ENCODE measurements at regions of chr16 and their contacts with region 1.

Region 1: DNA sequence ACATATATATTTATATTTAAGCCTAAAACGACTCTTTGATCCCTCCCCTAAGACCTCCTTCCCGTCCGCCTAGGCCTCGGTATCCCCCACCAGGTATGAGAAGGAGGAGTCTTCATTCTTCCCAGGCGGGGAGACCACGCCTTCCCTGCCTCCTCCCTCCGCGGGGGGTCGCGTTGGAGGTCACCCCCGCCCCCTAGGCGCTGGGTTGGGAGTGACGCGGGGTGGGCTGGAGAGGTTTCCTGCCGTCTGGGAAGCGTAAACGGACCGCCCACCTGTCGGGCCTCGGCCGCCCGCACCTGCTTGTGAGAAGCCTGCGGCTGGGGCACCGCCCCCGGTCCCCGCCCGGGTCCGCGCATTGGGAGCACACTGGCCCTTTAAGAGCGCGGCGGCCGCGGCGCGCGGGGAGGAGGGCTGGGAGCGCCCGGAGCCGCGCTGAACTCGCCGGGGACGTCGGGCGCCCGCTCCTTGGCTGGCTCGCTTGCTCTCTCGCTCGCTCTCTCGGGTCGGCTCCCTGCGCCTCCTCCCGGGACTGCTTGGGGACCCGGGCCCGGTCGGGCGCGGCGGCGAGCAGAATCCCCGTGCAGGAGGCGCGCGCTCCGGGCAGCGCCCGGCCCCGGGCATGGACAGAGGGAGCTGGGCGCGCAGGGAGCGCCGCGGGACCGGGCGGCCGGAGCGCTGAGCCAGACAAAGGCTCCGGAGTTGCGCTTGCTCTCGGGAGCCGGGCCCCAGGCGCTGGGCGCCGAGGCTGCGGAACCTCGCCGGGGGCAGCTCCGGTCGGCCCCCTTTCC is at the start of gene MMP15:
- DNase-seq: peak; percentile 89 to 94
- H3K4me3 ChIP-seq: peak within 1 kb of the TSS; percentile 94
- H3K27ac ChIP-seq: peak within 1 kb of the TSS; percentile 91
- H3K4me1 ChIP-seq: peaks cover 40% of the 10 kb centered on the region
- H3K27me3 ChIP-seq: no peaks in the 10 kb centered on the region
- CTCF ChIP-seq: no peak
- total RNA-seq, gene MMP15: 20.1 and 23.9 TPM in 2 replicates

Region 2: DNA sequence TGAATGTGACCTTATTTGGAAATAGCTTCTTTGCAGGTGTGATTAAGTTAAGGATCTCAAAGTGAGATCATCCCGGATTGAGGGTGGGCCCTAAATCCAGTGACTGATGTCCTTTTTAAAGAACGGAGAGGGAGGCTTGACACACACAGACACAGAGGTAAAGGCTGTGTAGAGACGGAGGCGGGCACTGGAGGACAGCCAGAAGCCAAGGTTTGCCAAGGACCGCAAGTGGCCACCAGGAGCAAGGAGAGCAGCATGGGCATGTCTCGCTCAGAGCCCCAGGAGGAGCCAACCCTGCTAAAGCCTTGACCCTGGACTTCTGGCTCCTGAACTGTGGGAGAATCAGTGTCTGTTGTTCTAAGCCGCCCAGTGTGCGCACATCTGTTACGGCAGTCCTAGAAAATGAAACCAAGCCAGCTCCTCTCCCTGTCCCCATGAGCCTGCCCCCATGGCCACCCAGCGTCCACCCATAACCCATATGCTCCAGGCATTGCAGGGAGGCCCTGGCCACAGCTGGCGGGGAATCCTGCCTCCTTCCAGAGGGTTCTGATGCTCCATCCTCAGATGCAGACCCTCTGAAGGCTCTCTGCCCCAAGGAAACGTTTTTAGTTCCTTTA is 69.9 kb before region 1 on chr16:
- CTCF ChIA-PET with region 1: no interaction called
- POLR2A ChIA-PET with region 1: no interaction called
- intact Hi-C with region 1: no loop called
- DNase-seq: peak in 1 of 2 experiments; percentile 39
- H3K4me3 ChIP-seq: no peak overlapping the region
- H3K27ac ChIP-seq: no peak overlapping the region
- H3K4me1 ChIP-seq: peaks cover 29% of the 10 kb centered on the region
- H3K27me3 ChIP-seq: no peaks in the 10 kb centered on the region
- CTCF ChIP-seq: no peak

Region 3: DNA sequence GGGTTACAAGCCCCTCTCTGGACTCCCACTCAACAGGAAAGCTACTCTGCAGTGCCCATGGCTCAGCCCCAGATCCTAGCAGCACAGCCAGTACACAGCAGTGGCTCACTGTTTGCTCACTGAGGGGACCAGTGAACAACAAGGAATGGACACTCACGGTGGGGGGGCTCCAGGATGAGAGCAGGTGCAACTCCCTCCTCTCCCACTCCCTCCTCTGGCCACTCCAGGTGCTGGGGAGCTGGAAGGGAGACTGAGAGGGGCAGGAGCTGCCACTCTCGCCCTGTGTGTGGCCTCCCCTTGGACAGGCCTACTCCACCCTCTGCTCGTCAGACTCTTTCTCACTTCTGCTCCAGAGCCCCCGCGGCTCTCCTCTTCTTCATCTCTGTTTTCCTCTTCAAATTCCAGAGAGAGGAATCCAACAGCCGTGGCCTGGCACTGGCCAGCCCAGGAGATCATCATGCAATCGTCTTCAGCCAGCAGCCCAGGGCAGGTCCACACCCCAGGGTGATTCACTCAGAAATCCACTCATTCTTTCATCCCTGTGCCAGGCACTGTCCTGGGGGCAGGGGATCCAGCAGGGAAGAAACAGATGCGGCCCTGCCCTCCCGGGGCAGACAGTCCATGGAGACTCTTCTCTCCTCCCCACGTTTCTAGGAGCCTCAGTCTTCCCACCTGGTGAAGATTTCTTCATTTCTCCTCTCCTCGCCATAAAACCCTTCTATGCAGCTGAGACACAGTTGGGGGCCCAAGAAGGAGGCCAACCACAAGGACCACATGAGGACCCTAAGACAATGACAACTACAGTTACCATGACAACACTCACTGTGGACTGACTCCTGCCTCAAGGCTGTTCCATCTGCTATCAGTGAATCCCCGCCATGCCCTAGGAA is 72.9 kb after region 1 on chr16:
- CTCF ChIA-PET with region 1: no interaction called
- POLR2A ChIA-PET with region 1: interaction called, 20 read pairs
- intact Hi-C with region 1: no loop called
- DNase-seq: peak in 1 of 2 experiments; percentile 23
- H3K4me3 ChIP-seq: no peak overlapping the region
- H3K27ac ChIP-seq: no peak overlapping the region
- H3K4me1 ChIP-seq: peaks cover 9% of the 10 kb centered on the region; the same call in 1 of the 2 replicates
- H3K27me3 ChIP-seq: peaks cover 18% of the 10 kb centered on the region; the same call in 1 of the 2 replicates
- CTCF ChIP-seq: no peak

Region 4: DNA sequence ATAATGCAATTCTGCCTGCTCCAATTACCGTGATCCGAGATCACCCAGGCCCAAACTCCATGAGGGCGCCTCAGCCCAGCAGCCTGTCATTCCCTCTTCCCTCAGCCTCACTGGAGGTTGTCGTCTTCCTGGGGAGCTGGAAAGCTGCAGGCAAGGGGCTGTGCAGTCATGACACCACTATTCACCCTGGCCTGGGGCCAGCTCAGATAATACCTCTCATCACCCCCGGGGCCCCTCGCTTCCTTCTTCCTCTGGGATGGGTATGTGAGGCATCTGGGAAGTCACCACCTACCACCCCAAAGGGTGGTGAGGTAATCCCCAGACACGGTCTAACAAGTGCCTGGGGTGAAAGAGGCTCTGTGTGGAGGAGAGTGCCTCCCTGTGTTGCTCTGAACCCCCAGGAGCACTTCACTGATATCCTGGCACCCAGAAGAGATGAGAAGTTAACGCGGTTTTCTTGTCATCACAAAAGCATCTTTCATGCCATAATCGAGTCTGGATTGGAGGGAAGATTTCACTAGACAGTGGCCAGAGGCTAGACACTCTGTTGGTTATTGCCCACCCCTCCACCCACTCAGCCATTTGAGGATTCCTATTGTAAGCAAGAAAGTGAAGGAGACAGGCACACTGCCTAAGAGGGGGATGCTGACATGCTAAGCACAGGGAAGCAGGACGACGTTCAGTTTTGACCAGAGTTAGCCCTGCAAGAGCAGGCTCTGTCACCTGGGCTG is 85.2 kb after region 1 on chr16:
- CTCF ChIA-PET with region 1: no interaction called
- POLR2A ChIA-PET with region 1: no interaction called
- intact Hi-C with region 1: no loop called
- DNase-seq: no peak
- H3K4me3 ChIP-seq: no peak overlapping the region
- H3K27ac ChIP-seq: no peak overlapping the region
- H3K4me1 ChIP-seq: no peaks in the 10 kb centered on the region
- H3K27me3 ChIP-seq: no peaks in the 10 kb centered on the region
- CTCF ChIP-seq: no peak

Region 5: DNA sequence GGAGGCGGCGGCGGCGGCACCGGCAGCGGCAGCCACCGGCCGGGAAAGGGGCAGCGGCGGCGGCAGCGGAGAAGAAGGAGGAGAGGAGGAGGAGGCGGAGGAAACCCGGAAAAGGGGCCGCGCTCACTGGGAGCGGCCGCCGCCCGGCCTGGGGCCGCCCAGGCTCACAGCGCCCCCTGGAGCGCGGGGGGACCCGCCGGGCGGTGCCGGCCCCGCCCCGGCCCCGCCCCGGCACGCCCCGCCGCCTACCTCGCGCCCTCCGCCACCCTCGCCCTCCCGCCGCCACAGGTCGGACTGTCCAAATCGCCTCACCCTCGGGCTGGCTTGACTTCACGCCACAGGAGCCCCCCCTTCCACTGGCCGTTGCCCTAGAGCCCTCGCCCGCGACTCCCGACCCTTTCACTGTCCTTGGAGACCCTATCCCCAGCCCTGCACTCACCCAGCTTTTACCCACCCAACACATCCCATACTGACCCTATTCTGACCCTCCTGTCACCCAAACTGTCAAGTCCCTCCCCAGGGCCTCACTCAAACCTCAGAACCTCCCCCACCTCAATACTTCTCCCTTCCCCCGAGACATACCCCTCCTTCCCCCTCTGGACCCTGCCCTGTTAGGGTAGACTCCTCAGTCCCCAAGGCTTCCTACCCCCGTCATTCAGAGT is 172.6 kb after region 1 on chr16 and contains the start of gene CSNK2A2:
- CTCF ChIA-PET with region 1: no interaction called
- POLR2A ChIA-PET with region 1: no interaction called
- intact Hi-C with region 1: loop called (anchors 10 kb)
- DNase-seq: peak in 1 of 2 experiments; percentile 64
- H3K4me3 ChIP-seq: peak within 1 kb of the TSS; percentile 80
- H3K27ac ChIP-seq: no peak within 1 kb of the TSS
- H3K4me1 ChIP-seq: peaks cover 26% of the 10 kb centered on the region
- H3K27me3 ChIP-seq: no peaks in the 10 kb centered on the region
- CTCF ChIP-seq: no peak; the same call in 1 of the 2 replicates
- total RNA-seq, gene CSNK2A2: 100 and 104 TPM in 2 replicates

Region 6: DNA sequence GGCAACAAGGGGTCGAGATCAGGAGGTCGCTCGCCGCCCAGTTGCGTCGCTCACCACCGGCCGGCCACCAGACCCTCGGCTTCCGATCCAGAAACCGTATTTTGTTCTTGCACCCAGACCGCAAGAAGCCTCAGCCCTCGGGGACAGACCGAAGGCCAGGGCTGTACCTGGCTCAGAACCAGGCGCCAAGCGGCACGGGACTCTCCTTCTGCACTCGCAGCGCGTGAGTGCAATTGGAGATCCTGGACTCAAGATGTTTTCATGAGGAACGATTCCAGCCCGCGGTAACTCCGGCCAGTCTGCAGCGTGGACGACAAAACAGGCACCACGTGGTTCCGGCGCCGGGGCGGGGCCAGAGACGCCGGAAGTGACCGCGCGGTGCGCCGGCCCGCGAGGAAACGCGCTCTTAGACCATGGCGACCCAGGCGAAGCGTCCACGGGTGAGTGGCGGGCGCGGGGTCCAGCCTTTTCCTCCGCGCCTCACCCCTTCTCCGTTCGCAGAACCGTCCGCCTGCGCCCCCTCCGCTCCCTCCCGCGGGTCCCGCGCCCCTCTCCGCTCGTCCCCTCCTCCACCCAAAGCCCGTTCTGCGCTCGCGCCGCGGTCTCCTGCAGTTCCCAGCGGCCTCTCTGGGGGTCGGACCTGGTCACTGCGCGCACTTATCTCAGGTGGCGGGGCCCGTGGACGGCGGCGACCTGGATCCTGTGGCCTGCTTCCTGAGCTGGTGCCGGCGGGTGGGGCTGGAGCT is 489.8 kb after region 1 on chr16 and contains the start of gene SETD6:
- CTCF ChIA-PET with region 1: no interaction called
- POLR2A ChIA-PET with region 1: no interaction called
- intact Hi-C with region 1: loop called (anchors 10 kb)
- DNase-seq: peak; percentile 77 to 88
- H3K4me3 ChIP-seq: peak within 1 kb of the TSS; percentile 99
- H3K27ac ChIP-seq: peak within 1 kb of the TSS; percentile 54
- H3K4me1 ChIP-seq: peaks cover 20% of the 10 kb centered on the region
- H3K27me3 ChIP-seq: no peaks in the 10 kb centered on the region
- CTCF ChIP-seq: no peak; the same call in 1 of the 2 replicates
- total RNA-seq, gene SETD6: 19.2 and 21.4 TPM in 2 replicates

Region 7: GRCh38 chr16:58755989-58756649 is 730.6 kb after region 1 on chr16:
- CTCF ChIA-PET with region 1: no interaction called
- POLR2A ChIA-PET with region 1: no interaction called
- intact Hi-C with region 1: loop called (anchors 5 kb)
- DNase-seq: peak; percentile 50 to 63
- H3K4me3 ChIP-seq: no peak overlapping the region
- H3K27ac ChIP-seq: no peak overlapping the region
- H3K4me1 ChIP-seq: no peaks in the 10 kb centered on the region
- H3K27me3 ChIP-seq: peaks cover 28% of the 10 kb centered on the region; the same call in 1 of the 2 replicates
- CTCF ChIP-seq: peak; percentile 73